ENCODE measurements at regions of chr4 and their contacts with region 1.

Region 1: DNA sequence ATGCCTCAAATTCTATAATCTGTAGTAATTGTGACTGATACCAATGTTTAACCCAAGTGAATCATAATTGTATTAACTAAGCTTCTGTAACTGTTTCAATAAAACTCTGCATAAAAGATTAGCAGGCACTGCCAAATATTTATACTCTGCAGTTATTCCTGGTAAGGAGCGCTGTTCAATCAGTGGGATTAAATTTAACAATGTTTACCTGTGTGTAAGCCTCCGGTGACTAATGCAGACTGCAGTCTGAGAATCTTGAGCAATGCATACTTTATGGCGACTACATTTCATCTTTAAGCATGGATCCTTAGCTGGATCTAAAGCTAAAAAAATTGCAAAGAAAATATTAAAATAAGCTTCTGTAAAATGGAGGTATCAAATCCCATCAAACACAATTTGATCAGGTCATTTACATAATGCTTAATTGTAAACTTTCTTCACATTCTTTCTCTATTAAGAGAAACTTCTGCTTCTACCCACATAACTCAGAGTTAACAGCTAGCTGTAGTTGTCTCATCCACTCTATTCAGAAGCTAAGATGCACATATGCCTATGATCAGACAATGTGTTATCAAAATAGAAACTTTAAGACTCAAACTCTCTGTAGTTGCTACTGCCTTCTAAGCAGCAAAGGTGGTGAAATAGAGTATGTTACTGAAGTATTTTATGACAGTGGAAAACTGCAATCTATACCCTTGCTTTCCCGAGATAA is 234.0 kb downstream of the SPOCK3 start:
- DNase-seq: no peak
- ATAC-seq: no peak
- H3K4me3 ChIP-seq: no peak overlapping the region
- H3K27ac ChIP-seq: no peak overlapping the region
- H3K4me1 ChIP-seq: no peaks in the 10 kb centered on the region
- H3K27me3 ChIP-seq: no peaks in the 10 kb centered on the region
- CTCF ChIP-seq: no peak
- EP300 ChIP-seq: no peak
- POLR2A ChIP-seq: no peak
- RAD21 ChIP-seq: no peak

Region 2: DNA sequence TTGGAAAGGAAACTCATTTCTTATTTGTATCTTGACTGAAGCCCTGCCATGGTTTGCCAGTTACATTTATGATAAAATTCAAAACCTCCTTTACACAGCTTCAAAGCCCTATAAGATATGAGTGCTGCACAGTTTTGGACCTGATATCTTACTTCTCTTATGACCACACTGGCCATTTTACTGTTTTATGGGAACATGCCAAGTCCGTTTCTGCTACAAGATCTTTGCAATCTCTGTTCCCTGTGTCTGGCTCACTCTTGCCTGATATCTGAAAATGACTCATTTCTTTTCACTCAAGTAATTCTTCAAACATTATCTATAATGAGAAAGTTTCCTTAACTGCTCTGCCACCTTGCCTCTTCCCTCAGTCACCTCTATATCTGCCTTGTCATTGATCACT is 13.3 kb before region 1 on chr4:
- CTCF ChIA-PET with region 1: interaction called, 3 read pairs
- POLR2A ChIA-PET with region 1: no interaction called
- RAD21 ChIA-PET with region 1: no interaction called
- SMC1A ChIA-PET with region 1: interaction called, 10 read pairs
- in situ Hi-C with region 1: no loop called
- intact Hi-C with region 1: no loop called
- DNase-seq: no peak
- ATAC-seq: no peak; the same call in 2 of the 3 replicates
- H3K4me3 ChIP-seq: no peak overlapping the region
- H3K27ac ChIP-seq: no peak overlapping the region
- H3K4me1 ChIP-seq: no peaks in the 10 kb centered on the region
- H3K27me3 ChIP-seq: no peaks in the 10 kb centered on the region
- CTCF ChIP-seq: no peak
- EP300 ChIP-seq: no peak
- POLR2A ChIP-seq: no peak
- RAD21 ChIP-seq: no peak